ENCODE measurements at regions of chr1 and their contacts with region 1.

Region 1: DNA sequence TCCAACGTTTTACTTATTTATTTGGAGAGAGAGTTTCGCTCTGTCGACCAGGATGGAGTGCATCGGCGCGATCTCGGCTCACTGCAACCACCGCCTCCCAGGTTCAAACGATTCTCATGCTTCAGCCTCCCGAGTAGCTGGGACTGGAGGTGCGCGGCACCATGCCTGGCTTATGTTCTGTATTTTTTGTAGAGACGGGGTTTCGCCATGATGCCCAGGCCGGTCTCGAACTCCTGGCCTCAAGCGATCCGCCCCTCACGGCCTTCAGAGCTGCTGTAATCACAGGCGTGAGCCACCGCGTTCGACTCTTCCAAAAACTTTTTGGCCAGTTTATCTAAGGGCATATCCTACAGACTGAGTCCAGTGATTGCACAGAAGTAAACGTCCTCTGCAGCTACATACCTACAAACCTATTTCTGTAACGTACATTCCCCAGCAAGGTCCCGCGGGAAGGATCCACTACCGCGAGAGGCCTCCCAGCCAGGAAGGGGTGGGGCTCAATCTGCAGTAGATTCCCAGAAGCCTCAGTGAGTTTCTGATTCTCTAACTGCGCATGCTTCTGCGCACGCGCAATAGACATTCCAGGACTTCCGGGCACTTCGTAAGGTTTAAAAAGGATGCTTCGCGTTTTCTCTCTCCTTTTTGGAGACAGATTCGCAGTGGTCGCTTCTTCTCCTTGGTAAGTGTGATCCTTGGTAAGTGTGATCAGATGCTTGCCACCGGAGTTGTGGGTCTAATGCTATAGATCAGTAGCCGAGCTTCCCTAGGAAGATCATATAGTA is at the start of gene RCC1:
- DNase-seq: peak; percentile 82
- ATAC-seq: peak; percentile 87
- H3K4me3 Mint-ChIP-seq: peak within 1 kb of the TSS; percentile 98
- H3K27ac Mint-ChIP-seq: peak within 1 kb of the TSS; percentile 98
- H3K4me1 Mint-ChIP-seq: peaks cover 38% of the 10 kb centered on the region
- H3K27me3 Mint-ChIP-seq: no peaks in the 10 kb centered on the region
- CTCF ChIP-seq: no peak
- total RNA-seq, gene RCC1: 45.2 and 47.5 TPM in 2 replicates

Region 2: GRCh38 chr1:28369371-28370238 is 136.0 kb before region 1 on chr1 and contains the start of gene PHACTR4:
- CTCF ChIA-PET with region 1: no interaction called
- POLR2A ChIA-PET with region 1: interaction called, 16 read pairs
- intact Hi-C with region 1: loop called (anchors 2 kb)
- DNase-seq: peak; percentile 74
- ATAC-seq: peak; percentile 89
- H3K4me3 Mint-ChIP-seq: peak within 1 kb of the TSS; percentile 96
- H3K27ac Mint-ChIP-seq: peak within 1 kb of the TSS; percentile 98
- H3K4me1 Mint-ChIP-seq: peaks cover 21% of the 10 kb centered on the region
- H3K27me3 Mint-ChIP-seq: no peaks in the 10 kb centered on the region
- CTCF ChIP-seq: no peak
- total RNA-seq, gene PHACTR4: 27.2 and 31.5 TPM in 2 replicates

Region 3: GRCh38 chr1:28518000-28518744 is 12.6 kb after region 1 on chr1:
- CTCF ChIA-PET with region 1: interaction called, 13 read pairs
- POLR2A ChIA-PET with region 1: interaction called, 85 read pairs
- intact Hi-C with region 1: loop called (anchors 1 kb)
- DNase-seq: peak; percentile 89
- ATAC-seq: peak; percentile 88
- H3K4me3 Mint-ChIP-seq: peak overlapping the region; percentile 90
- H3K27ac Mint-ChIP-seq: peak overlapping the region; percentile 73
- H3K4me1 Mint-ChIP-seq: peaks cover 28% of the 10 kb centered on the region
- H3K27me3 Mint-ChIP-seq: no peaks in the 10 kb centered on the region
- CTCF ChIP-seq: no peak

Region 4: DNA sequence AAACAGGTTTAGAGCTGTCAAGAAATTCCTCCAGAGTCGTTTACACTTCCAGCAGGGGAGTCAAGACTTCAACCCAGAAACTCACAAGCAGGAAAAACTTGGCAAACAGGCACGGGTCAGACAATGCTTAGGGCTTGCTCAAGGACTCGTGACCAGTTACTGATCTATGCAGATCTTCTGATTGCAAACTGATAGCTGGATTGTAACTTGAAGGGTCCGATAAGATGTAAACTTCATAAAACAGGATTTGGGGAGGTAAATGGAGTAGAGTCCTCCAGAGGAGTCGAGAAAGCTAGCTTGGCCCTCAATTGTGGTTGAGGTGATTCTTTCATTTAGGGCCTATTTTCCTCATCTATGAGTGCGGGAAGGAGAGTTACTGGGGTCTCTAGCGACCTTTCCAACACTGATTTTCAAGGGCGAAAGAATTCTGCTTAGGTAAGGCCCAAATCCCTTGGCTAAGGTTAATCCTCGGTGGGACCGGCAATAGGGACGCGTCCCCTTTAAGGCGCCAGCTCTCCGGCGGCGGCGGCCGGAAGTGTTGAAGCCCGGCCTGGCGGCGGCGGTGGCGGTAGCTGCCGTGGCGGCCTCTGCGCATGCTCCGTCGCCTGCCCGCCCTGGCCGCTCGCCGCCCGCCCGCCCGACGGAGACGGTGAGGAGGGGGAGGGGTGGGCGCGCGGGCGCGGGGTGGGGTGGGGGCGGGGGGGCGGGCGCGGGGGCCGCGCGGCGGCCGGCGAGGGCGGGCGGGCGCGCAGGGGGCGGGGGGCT is 162.8 kb after region 1 on chr1 and contains the start of gene GMEB1:
- CTCF ChIA-PET with region 1: no interaction called
- POLR2A ChIA-PET with region 1: interaction called, 27 read pairs
- intact Hi-C with region 1: loop called (anchors 2 kb)
- DNase-seq: peak; percentile 73
- ATAC-seq: peak; percentile 65
- H3K4me3 Mint-ChIP-seq: peak within 1 kb of the TSS; percentile 92
- H3K27ac Mint-ChIP-seq: peak within 1 kb of the TSS; percentile 97
- H3K4me1 Mint-ChIP-seq: peaks cover 17% of the 10 kb centered on the region
- H3K27me3 Mint-ChIP-seq: no peaks in the 10 kb centered on the region
- CTCF ChIP-seq: no peak
- total RNA-seq, gene GMEB1: 26.8 and 27.4 TPM in 2 replicates

Measured in activated B cell treated with CpG ODN at 0.5 μM for 24 hours (primary cell).